ENCODE measurements at regions of chr14 and their contacts with region 1.

Region 1: DNA sequence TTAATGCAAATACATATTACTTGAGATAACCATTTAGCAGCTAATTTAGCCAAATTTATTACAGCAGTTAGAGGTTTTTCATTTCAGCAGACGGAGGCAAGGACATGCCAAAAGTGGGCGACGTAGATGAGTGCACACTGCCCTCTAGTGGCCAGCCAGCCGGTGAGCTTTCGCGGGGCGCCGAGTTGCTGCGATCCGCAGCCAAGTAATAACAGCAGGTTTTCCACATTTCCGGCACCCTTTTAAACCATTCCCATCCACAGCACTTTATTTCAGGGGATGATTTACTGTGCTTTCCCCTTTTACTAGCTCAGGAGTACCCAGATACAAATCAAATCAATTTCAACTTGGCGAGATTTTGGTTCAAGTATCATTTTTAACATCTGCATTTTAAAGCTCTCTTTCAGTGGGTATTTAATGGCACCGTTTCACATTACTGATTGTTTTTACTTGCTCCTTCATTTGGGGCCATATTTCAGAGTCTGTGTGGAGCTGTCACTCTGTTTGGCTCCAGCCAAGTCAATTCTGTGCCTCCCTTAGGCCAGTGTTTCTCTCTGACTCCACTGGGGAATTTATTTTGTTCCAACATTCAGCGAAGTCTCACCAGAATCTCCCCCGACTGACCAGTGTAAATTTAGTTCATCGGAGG is 158.0 kb downstream of the EGLN3 start:
- DNase-seq: peak; percentile 58 to 64
- ATAC-seq: peak; percentile 86 to 89
- H3K4me3 ChIP-seq: no peak overlapping the region
- H3K27ac ChIP-seq: no peak overlapping the region
- H3K4me1 ChIP-seq: 0 out of 3 replicates have a peak, but pooled peaks cover 3% of the 10 kb centered on the region
- CTCF ChIP-seq: peak; percentile 85
- EP300 ChIP-seq: no peak
- POLR2A ChIP-seq: no peak
- RAD21 ChIP-seq: peak; percentile 87 to 90

Region 2: GRCh38 chr14:32576088-32576795 is 1216.6 kb before region 1 on chr14:
- CTCF ChIA-PET with region 1: interaction called, 13 read pairs
- POLR2A ChIA-PET with region 1: no interaction called
- DNase-seq: peak; percentile 33 to 55
- ATAC-seq: peak; percentile 85 to 91; a peak in 5 of 6 replicates
- H3K4me3 ChIP-seq: no peak overlapping the region
- H3K27ac ChIP-seq: no peak overlapping the region
- H3K4me1 ChIP-seq: no peaks in the 10 kb centered on the region
- CTCF ChIP-seq: peak; percentile 93
- EP300 ChIP-seq: no peak
- POLR2A ChIP-seq: no peak
- RAD21 ChIP-seq: peak; percentile 93 to 95

Region 3: DNA sequence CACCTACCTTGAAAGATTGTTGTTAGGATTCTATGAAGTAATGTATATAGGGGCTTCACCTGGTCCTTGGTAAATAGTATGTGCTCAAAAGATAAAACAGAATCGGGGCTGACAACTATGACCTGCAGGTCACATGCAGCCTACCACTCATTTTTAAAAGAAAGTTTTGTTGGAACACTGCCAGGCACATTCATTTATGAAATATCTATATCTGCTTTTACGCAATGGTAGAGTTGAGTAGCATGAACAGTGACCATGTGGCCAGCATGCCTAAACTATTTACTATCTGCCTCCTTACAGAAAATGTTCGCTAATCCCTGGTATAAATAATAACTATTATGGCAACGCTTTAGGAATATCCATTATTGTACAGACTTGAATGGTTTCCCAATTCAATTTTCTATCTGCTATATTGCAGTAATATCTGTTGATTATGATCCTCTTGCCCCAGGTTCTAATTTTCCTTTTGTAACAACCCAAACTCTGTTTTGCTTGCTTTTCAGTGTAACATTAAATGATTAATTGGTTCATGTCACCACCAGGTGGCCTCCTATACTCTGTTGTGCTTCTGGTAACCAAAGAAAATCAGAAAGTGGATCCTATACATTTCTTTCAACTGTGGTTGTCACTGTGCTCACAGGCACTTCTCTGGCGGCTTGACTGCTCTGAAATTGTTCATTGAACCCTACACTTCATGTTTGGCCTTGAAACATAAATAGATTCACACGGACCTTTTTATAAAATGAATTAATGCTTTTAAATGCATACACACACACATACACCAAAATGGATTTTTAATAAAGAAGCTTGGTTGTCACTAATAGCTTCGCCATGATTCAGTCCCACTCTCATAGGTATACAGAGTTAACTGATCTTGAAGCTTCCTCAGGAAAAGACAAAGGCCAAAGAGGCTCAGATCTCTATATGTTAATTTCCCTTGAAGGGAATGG is 1081.8 kb before region 1 on chr14:
- CTCF ChIA-PET with region 1: interaction called, 16 read pairs
- POLR2A ChIA-PET with region 1: no interaction called
- DNase-seq: peak; percentile 26 to 32
- ATAC-seq: peak; percentile 66 to 71; a peak in 5 of 6 replicates
- H3K4me3 ChIP-seq: no peak overlapping the region
- H3K27ac ChIP-seq: no peak overlapping the region
- H3K4me1 ChIP-seq: no peaks in the 10 kb centered on the region
- CTCF ChIP-seq: peak; percentile 51
- EP300 ChIP-seq: no peak
- POLR2A ChIP-seq: no peak
- RAD21 ChIP-seq: peak; percentile 63 to 67

Region 4: GRCh38 chr14:33764876-33765650 is 27.8 kb before region 1 on chr14:
- CTCF ChIA-PET with region 1: interaction called, 23 read pairs
- POLR2A ChIA-PET with region 1: no interaction called
- DNase-seq: no peak
- ATAC-seq: no peak
- H3K4me3 ChIP-seq: no peak overlapping the region
- H3K27ac ChIP-seq: no peak overlapping the region
- H3K4me1 ChIP-seq: no peaks in the 10 kb centered on the region
- CTCF ChIP-seq: no peak
- EP300 ChIP-seq: no peak
- POLR2A ChIP-seq: no peak
- RAD21 ChIP-seq: no peak

Region 5: DNA sequence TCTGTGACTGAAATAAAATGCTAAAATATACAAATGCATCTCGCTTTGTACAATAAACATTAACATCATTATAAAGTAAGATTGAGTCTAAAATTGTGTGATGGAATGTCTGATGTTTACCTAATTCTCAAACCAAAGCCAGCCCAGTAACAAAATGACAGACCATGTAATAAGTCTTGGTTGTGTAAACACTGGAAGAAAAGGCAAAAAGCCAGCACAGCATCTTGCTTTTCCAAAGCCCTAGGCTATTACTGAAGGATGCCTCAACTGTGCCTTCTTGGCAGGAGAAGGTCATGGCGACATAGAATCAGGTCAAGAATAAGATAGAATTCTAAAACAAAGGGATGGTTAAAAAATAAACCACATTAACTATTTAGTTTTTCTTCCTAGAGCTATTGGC is 11.6 kb before region 1 on chr14:
- CTCF ChIA-PET with region 1: interaction called, 36 read pairs
- POLR2A ChIA-PET with region 1: no interaction called
- DNase-seq: no peak
- ATAC-seq: no peak
- H3K4me3 ChIP-seq: no peak overlapping the region
- H3K27ac ChIP-seq: no peak overlapping the region
- H3K4me1 ChIP-seq: no peaks in the 10 kb centered on the region
- CTCF ChIP-seq: no peak
- EP300 ChIP-seq: no peak
- POLR2A ChIP-seq: no peak
- RAD21 ChIP-seq: no peak

Region 6: GRCh38 chr14:33805593-33805992 is 12.7 kb after region 1 on chr14:
- CTCF ChIA-PET with region 1: interaction called, 36 read pairs
- POLR2A ChIA-PET with region 1: no interaction called
- DNase-seq: no peak
- ATAC-seq: 0 out of 6 replicates have a peak, but pooled peaks of 1 of the 2 experiments have one; percentile 34
- H3K4me3 ChIP-seq: no peak overlapping the region
- H3K27ac ChIP-seq: no peak overlapping the region
- H3K4me1 ChIP-seq: no peaks in the 10 kb centered on the region
- CTCF ChIP-seq: no peak
- EP300 ChIP-seq: no peak
- POLR2A ChIP-seq: no peak
- RAD21 ChIP-seq: no peak

Region 7: GRCh38 chr14:33979613-33980276 is 186.9 kb after region 1 on chr14:
- CTCF ChIA-PET with region 1: no interaction called
- POLR2A ChIA-PET with region 1: no interaction called
- DNase-seq: no peak
- ATAC-seq: no peak
- H3K4me3 ChIP-seq: no peak overlapping the region
- H3K27ac ChIP-seq: no peak overlapping the region
- H3K4me1 ChIP-seq: no peaks in the 10 kb centered on the region
- CTCF ChIP-seq: no peak
- EP300 ChIP-seq: no peak
- POLR2A ChIP-seq: no peak
- RAD21 ChIP-seq: no peak

Measured in A549 (cell line).